CD4-positive, alpha-beta memory T cell (primary cell): ENCODE measurements at regions of chr10 and their contacts with region 1.

Region 1: DNA sequence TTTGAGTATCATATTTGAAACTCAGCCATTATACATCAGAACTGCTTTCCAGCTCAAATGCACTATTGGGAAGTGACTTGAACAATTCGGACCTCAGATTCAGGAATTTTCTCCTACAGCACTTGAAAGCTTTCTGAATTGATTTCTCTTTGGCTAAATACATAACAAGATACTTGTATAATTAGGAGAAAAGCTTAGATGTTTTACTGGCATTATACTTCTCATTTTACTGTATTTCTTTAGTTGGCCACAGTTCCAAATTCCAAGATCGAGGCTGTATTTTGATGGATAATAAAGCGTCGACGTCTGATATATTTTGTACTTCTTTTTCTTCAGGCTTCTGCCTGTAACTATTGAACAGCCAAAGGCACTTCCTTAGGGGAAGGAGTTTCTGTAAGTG is 26.7 kb upstream of the LYZL2 start:
- DNase-seq: no peak
- H3K4me3 ChIP-seq: no peak overlapping the region
- H3K4me3 Mint-ChIP-seq: no peak overlapping the region
- H3K27ac ChIP-seq: no peak overlapping the region
- H3K27ac Mint-ChIP-seq: no peak overlapping the region
- H3K4me1 ChIP-seq: no peaks in the 10 kb centered on the region
- H3K4me1 Mint-ChIP-seq: no peaks in the 10 kb centered on the region
- H3K27me3 ChIP-seq: peaks cover 3% of the 10 kb centered on the region
- H3K27me3 Mint-ChIP-seq: peaks cover 22 to 24% of the 10 kb centered on the region in 2 donors

Region 2: DNA sequence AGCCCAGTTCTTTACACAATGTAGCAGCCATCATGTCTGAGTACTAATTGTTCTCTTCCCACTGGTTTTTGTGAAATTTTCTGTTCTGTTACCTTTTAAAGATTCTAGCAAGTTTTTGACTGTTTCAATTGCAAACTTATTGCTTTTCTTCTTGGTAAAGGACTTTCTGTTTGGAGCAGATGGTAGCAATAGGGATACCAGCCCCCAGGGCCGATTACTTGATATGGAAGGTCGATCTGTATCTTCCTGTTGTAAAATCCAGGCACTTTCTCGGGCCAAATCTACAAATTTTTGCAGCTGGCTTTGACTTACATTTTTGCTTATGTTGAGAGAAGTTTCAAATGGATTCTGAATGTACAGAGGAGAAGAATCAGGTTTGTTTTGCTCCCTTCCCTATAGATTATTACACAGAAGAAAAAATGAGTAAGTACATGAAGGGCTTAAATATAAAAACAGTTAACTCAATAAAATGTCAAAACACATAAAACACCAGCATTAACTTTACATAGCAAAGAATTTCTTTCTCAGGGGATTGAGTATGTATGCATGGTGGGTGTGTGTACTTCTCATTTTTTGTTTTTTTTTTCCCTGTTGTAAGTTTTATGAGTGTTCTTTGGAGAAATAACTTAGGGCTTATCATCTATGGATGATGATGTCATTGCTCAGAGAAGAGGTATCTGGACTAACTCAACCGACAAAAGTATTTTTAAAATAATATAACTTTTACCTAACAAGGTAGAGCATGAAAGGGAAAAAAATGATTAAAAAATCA is 342.5 kb before region 1 on chr10:
- CTCF ChIA-PET with region 1: no interaction called
- POLR2A ChIA-PET with region 1: no interaction called
- intact Hi-C with region 1: no loop called
- DNase-seq: no peak
- H3K4me3 ChIP-seq: no peak overlapping the region
- H3K4me3 Mint-ChIP-seq: no peak overlapping the region
- H3K27ac ChIP-seq: no peak overlapping the region
- H3K27ac Mint-ChIP-seq: peak overlapping the region in 1 of 7 donors; percentile 13
- H3K4me1 ChIP-seq: no peaks in the 10 kb centered on the region
- H3K4me1 Mint-ChIP-seq: peaks cover 6 to 12% (median 9%) of the 10 kb centered on the region in 4 donors
- H3K27me3 ChIP-seq: no peaks in the 10 kb centered on the region
- H3K27me3 Mint-ChIP-seq: no peaks in the 10 kb centered on the region

Region 3: DNA sequence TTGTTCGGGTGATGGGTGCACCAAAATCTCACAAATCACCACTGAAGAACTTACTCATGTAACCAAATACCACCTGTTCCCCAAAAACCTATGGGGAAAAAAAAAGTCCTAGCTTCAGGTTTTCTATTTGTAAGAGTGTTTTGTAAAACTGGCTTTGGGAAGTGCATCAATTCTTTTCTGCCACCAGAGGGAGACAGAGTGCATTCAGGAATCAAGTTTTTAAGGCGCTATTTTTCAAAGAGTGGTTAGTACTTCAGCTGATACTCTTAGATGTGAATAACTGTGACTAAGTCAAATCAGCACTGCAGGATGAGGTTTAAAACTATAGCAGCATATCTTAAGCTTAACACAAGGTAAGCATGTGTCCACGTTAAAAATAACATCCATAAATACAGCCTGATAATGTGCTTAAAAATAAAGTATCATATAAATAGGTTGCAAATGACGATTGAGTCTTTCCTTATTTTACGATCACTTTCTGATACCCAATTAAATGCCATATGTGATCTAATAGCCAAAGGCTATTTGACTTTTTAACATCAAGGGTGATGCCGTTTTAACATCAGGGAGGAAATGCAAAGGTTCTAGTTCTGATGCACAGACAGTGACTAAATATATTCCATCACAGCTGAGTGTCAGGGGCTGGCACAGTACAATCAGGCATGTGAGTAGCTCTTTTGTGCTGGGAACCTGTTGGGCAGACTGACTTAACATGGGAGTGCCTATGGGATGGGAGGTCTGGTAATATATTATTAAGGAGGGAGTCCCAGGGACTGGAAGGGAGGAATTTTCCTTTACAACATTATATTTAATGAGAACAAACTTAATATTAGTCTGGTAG is 16.1 kb before region 1 on chr10:
- CTCF ChIA-PET with region 1: interaction called, 19 read pairs
- POLR2A ChIA-PET with region 1: no interaction called
- intact Hi-C with region 1: no loop called
- DNase-seq: peak; percentile 20 to 40 (median 26)
- H3K4me3 ChIP-seq: no peak overlapping the region
- H3K4me3 Mint-ChIP-seq: no peak overlapping the region
- H3K27ac ChIP-seq: no peak overlapping the region
- H3K27ac Mint-ChIP-seq: no peak overlapping the region
- H3K4me1 ChIP-seq: no peaks in the 10 kb centered on the region
- H3K4me1 Mint-ChIP-seq: peaks cover 0 to 1% (median 0%) of the 10 kb centered on the region in 4 donors
- H3K27me3 ChIP-seq: no peaks in the 10 kb centered on the region
- H3K27me3 Mint-ChIP-seq: peaks cover 20 to 34% of the 10 kb centered on the region in 2 donors